Posterior vena cava (tissue), 2 donors: ENCODE measurements at regions of chr14 and their contacts with region 1.

Region 1: GRCh38 chr14:20682435-20683124 is 1.8 kb upstream of the RNASE4 start:
- DNase-seq: peak; percentile 96

Region 2: DNA sequence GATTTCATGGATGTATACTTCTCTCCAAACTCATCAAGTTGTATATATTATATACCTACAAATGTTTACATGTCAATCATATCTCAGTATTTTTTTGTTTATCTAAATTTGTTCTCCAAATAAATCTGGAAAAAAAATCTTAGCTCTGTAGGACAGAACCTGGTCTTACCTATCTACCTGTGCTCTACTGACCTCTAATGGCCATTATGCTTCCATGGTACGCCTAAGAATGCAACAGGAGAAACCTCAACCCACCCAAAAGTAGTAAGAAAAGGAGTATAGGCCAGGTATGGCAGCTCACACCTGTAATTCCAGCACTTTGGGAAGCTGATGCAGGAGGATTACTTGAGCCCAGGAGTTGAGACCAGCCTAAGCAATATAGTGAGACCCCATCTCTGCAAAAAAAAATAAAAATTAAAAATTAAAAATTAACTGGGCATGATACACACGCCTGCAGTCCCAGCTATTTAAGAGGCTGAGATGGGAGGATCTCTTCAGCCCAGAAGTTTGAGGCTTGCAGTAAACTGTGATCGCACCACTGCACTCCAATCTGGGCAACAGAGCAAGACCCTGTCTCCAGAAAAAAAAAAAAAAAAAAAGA is 434.8 kb before region 1 on chr14:
- intact Hi-C with region 1: no loop called
- DNase-seq: no peak

Region 3: DNA sequence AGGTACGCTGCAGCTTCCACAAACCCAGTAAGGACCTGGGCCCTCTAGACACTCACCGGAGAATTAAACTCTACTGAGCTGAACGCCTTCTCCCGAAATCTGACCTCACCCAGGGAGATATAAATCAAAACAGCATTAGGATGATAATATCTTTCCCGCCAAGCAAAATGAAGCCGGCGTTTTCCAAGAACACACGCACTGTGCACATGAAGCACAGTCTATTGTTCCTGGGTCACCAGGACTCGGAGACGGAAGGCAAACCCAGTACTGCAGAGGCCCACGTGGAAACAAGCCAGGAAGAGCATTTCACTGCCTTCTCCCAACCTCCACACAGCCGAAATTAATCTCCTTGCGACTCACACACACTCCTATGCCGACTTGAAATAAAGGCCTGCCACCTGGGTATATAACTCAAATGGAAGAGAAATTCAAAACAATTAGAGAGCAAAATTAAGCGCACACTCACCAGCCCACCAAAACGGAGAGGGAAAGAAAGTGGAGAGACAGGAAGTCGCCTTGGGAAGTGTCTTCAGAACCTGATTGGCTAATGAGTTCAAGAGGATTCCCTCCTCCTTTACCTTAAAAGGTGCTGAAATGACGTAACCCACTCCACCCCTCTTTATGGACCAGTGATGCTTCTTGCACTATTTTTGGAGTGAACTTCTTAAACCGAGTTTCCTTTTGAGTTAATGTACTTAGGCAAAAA is 349.6 kb before region 1 on chr14 and contains the start of gene CCNB1IP1:
- intact Hi-C with region 1: loop called in 1 of 2 experiments (anchors 10 kb)
- DNase-seq: no peak
- total RNA-seq, gene CCNB1IP1: 28.9 to 31.1 TPM

Region 4: DNA sequence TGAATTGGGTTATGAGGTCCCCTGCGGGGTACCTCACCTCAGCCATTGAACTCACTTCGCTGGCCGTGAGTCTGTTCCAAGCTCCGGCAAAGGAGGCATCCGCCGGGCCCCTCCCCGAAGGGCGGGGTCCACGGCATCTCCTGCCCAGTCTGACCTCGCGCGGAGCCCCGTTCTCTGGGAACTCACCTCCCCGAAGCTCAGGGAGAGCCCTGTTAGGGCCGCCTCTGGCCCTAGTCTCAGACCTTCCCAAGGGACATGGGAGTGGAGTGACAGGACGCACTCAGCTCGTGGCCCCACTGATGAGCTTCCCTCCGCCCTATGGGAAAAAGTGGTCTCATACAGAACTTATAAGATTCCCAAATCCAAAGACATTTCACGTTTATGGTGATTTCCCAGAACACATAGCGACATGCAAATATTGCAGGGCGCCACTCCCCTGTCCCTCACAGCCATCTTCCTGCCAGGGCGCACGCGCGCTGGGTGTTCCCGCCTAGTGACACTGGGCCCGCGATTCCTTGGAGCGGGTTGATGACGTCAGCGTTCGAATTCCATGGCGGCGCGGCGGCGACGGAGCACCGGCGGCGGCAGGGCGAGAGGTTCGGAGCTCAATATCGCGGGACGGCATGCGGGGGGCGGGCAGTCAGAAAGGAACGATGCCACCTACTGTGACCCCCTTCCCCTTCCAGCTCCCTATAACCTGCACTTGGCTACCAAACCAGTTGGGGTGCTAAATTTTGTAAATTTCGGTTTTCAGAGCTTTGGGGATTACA is 339.3 kb before region 1 on chr14 and contains the start of gene PARP2:
- intact Hi-C with region 1: loop called (anchors 10 kb)
- DNase-seq: peak; percentile 99
- total RNA-seq, gene PARP2: 11.9 to 15.5 TPM

Region 5: DNA sequence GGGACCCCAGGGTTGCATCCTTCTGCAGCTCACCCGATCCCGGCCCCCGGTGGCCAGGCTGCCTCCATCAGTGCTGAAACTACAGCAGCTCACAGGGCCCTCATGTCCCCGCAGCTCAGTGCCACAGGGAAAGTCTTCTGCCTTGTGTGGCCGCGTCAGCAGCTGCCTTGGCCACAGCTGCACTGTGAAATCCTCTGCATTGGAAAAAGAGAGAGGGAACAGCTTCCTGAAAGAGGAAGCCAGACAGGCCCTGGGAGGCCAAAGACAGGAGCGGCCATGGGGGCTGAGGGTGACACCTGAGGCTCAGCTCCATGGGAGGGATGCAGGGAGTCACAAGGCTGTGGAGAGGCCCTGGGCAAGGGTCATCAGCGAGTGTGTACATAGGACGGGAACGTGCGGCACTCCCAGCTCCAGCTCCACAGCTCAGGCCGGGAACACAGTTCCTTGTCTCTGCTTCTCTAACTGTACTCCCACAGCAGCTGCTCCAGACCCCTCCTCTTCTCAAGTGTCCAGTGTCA is 306.4 kb before region 1 on chr14:
- intact Hi-C with region 1: no loop called
- DNase-seq: no peak

Region 6: DNA sequence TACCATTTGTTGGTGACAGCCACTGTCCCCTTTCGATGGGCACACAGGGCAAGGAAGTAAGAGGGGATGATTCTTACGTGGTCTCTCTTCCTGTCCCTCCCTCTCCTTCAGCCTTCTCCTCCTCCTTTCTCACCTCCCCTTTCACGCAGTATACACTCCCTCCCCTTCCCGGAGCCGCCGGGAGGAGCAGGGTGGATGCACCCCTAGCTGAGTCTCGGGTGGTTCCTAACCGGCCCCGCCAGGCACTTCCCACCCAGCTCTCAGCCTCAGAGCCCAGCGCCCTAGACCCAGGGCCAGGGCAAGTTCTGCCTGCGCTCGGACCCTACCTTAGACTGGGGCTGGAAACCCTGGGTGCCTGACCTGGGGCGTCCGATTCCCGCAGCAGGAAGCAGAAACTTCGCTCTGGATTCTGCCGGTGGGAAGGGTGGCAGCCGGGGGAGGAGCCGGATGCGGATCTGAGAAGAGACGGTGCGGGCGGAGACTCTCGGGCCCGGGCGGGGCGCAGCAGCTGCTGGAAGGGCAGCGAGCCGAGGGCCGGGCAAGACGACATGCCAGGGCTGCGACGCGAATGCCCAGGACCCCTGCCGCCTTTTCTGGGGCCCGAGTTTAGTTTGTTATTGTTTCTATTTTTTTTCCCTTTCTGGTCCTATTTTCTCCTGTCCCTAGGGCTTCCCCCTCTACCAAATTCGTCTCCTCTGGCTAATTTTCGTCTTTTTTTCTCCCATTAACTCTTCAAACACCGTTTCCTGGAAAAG is 269.4 kb before region 1 on chr14 and contains the start of gene TEP1:
- intact Hi-C with region 1: loop called in 1 of 2 experiments (anchors 5 kb)
- DNase-seq: peak; percentile 97
- total RNA-seq, gene TEP1: 36.1 to 38.7 TPM

Region 7: DNA sequence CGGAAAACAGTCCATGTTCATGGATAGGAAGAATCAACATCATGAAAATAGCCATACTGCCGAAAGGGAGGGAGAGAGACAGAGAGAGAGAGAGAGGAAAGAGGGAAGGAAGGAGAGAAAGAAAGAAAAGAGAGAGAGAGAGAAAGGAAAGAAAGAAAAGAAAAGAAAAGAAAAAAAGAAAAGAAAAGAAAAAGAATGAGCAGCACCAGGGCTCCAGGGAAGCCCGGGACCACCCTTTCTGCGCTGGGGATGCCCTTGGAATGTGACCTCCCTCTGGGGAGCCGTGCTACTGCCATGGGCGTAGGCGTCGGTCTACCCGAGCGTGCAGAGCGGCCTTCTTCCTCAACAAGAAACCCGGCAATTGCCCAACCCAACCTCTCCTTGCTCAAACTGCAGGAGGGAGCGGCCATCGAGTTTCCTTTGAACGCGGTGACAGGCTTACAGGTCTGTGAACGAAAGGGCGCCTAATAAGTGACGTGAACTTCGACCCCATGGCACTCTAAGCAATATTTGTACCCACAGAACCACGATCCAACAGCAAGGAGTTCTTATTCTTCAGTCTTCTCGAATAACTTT is 58.0 kb before region 1 on chr14:
- intact Hi-C with region 1: loop called in 1 of 2 experiments (anchors 5 kb)
- DNase-seq: peak; percentile 87

Region 8: DNA sequence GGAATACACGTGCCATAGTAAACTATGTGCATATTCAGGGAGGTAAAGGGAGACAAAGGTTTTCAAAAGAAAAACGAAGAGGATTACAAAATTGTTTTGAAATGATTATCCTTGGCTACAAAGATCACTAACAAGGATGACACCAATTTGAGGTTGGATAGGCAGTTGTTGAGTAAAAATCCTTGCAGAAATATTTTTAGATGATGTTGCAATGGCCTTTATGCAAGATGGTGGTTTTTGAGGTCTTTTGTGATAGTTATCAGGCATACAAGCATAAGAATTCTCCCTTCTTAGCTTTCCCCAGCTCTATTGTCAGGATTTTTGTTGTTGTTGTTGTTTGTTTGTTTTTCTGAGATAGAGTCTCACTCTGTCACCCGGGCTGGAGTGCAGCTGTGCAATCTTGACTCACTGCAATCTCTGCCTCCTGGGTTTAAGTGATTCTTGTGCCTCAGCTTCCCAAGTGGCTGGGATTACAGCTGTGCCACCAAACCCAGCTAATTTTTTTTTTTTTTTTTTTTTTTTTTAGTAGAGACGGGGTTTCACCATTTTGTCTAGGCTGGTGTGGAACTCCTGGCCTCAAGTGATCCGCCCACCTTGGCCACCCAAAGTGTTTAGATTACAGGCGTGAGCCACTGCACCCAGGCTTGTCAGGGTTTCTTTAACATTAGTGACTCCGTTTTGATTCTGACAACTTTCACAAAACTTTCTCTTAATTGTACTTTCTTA is 112.2 kb after region 1 on chr14:
- intact Hi-C with region 1: no loop called
- DNase-seq: no peak

Region 9: GRCh38 chr14:22412926-22413411 is 1730.4 kb after region 1 on chr14:
- intact Hi-C with region 1: no loop called
- DNase-seq: no peak